ENCODE measurements at regions of chr5 and their contacts with region 1.

Region 1: DNA sequence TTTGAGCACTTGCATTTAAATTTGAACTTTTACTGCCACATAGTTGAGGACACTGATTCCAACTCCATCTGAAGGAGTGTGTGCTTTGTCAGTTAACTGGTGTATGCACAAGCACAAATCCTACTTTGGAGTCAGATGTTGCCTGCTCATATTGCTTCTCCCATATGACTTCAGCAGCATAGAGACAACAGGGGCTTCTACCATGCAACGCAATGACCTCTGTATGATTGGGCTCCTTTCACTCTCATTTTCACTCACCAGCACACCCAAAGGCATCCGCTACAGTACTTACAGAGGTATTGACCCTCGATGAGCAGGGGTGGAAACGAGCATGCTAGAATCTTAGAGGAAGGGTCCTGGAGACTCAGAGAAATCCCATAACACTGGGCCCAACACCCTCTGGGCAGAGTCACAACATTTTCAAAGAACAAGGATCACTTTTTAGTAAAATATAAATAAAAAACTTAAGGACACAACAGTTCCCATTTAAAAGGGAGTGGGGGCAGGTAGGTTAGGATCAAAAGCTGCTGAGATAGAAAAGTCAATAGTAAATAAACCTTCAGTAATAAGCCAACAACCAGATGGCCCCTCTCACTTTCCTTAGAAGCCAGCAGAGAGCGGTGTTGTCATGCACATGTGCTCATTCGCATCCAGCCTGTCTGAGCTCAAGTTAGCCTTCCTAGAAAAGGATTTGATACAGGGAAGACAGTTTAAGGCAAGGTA is 203.8 kb downstream of the SNCAIP start:
- ATAC-seq: peak; percentile 80 to 97 (median 90)
- H3K4me3 ChIP-seq: no peak overlapping the region
- H3K27ac ChIP-seq: no peak overlapping the region
- H3K4me1 ChIP-seq: no peaks in the 10 kb centered on the region

Region 2: DNA sequence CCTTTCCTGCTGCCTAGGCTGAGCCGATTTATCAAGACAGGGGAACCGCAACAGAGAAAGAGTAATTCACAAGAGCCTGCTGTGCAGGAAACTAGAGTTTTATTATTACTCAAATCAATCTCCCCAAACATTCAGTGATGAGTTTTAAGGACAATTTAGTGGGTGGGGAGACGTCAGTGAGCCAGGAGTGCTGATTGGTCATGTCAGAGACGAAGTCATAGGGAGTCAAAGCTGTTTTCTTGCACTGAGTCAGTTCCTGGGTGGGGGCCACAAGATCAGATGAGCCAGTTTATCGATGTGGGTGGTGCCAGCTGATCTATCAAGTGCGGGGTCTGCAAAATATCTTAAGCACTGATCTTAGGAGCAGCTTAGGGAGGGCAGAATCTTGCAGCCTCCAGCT is 348.5 kb after region 1 on chr5:
- in situ Hi-C with region 1: loop called in 1 of 9 experiments (anchors 10 kb)
- ATAC-seq: no peak
- H3K4me3 ChIP-seq: no peak overlapping the region
- H3K27ac ChIP-seq: no peak overlapping the region
- H3K4me1 ChIP-seq: no peaks in the 10 kb centered on the region

Region 3: DNA sequence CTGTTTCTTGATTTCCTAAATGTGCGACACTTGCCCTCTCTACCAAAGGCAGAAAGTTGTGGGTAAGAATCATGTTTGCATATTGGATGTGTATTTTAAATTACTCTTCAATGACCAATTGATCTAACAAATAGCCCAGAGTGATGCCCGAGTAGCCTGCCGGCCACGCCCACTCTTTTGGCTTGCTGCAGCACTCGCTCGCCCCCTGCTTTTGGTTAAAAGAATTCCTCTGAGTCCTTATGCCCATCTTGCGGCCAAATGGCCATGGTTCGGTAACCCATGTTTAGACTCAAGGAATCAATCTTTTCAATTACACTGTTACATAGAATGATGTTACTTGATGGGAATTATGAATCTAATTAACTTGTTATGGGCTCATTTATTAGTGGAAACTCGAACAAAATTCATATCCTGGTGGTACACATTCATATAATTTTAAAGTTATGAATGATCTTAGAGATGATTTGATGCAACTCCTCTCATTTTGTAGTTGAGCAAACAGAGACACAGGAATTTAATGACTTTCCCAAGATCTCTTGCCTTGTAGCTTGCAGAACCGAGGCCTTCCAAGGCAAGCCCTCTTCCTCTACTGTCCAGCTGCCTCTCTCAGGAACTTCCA is 484.2 kb after region 1 on chr5:
- in situ Hi-C with region 1: loop called in 1 of 9 experiments (anchors 25 kb)
- ATAC-seq: peak in 2 of 8 experiments; percentile 29 to 63
- H3K4me3 ChIP-seq: no peak overlapping the region
- H3K27ac ChIP-seq: no peak overlapping the region
- H3K4me1 ChIP-seq: peaks cover 0 to 20% of the 10 kb centered on the region in 2 donors

Region 4: DNA sequence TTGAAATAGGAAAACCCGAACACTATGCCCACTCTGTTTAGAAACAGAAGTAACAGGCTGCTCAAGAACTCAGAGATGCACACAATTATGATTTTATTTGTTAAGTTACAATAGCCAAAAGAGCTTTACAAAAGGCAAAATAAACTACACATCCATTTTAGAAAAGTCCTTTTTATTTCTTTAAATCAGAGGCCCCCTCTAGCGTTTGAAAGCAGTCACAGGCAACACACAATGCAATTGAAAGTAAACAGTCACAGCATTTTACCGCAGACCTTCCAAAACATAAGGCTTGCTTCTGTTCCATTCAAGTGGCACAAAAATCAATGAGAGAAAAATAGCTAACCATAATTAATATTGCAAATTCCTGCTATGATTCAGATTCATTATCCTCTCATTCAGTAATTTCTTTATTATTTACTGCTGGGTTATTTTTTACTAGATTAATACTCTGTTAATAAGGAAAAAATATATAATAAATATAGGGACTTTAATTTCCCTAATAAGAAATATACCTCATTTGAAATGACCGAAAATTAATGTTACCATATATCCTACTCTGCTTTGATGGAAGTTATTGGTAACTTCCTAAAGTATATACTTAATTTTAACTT is 829.1 kb after region 1 on chr5:
- in situ Hi-C with region 1: loop called in 2 of 9 experiments (anchors 25 kb)
- ATAC-seq: peak in 3 of 8 experiments; percentile 52 to 56 (median 53)
- H3K4me3 ChIP-seq: no peak overlapping the region
- H3K27ac ChIP-seq: no peak overlapping the region
- H3K4me1 ChIP-seq: no peaks in the 10 kb centered on the region

Region 5: DNA sequence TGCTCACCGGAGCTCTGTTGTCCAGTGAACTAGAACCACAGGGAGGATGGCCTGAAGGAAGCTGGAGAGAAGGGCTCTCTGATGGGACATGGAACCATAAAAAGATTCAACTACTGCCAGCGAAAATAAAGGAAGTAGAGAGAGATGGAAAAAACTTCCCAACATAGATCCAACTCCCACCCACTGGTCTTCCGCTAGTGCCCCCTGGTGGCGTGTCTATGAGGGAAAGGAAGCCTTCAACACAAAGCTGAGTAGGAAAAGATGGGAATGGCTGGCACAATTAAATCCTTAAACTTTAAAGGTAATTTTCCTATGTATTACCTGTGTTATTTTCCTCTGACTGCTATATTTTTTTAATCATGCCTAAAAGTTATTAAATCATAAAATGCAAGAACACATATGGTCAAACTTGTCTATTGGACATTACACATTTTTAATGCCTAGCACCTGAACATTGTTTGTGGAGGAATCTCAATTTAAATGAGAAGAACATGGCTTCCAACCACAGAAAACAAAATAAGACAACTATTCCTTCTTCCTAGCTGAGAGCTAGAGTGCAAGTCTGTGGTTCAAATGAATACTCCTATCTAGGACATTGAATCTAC is 855.8 kb after region 1 on chr5:
- in situ Hi-C with region 1: loop called in 1 of 9 experiments (anchors 25 kb)
- ATAC-seq: peak in 2 of 8 experiments; percentile 42 to 45
- H3K4me3 ChIP-seq: no peak overlapping the region
- H3K27ac ChIP-seq: no peak overlapping the region
- H3K4me1 ChIP-seq: no peaks in the 10 kb centered on the region

Region 6: DNA sequence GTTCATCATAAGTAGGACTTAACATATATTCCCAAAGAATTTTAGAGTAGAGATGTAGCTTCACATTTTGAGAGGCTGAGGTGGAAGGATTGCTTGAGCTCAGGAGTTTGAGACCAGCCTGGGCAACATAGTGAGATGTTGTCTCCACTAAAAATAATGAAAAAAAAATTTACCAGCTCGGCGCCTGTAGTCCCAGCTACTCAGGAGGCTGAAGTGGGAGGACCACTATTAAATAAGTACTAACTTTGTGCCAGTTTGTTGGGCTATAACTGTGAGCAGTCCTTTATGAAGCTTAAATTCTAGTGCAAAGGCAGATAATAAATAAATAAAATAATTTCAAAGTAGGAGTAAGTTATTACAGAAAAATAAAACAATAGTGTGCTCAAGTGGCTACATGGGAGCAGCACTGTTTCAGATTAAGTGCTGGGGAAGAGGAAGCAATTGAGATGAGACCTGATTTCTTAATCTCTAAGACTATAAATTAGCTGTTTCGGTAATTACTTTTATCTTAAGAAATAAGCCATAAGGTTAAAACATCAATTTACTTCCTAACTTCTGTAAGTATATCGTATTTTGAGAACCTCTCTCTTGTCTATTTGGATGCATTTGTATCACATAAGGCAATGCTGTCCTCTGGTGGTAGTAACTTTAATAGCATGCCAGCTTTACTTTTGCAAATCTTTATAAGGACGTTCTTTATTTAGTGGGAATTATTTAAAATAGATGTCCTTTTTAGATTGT is 1095.0 kb after region 1 on chr5:
- in situ Hi-C with region 1: loop called in 3 of 9 experiments (anchors 25 kb)
- ATAC-seq: peak in 3 of 8 experiments; percentile 49 to 66 (median 50)
- H3K4me3 ChIP-seq: no peak overlapping the region
- H3K27ac ChIP-seq: no peak overlapping the region
- H3K4me1 ChIP-seq: no peaks in the 10 kb centered on the region